Activated CD4-positive, alpha-beta T cell treated with anti-CD3 and anti-CD28 coated beads for 36 hours (primary cell): ENCODE measurements at regions of chr9 and their contacts with region 1.

Region 1: DNA sequence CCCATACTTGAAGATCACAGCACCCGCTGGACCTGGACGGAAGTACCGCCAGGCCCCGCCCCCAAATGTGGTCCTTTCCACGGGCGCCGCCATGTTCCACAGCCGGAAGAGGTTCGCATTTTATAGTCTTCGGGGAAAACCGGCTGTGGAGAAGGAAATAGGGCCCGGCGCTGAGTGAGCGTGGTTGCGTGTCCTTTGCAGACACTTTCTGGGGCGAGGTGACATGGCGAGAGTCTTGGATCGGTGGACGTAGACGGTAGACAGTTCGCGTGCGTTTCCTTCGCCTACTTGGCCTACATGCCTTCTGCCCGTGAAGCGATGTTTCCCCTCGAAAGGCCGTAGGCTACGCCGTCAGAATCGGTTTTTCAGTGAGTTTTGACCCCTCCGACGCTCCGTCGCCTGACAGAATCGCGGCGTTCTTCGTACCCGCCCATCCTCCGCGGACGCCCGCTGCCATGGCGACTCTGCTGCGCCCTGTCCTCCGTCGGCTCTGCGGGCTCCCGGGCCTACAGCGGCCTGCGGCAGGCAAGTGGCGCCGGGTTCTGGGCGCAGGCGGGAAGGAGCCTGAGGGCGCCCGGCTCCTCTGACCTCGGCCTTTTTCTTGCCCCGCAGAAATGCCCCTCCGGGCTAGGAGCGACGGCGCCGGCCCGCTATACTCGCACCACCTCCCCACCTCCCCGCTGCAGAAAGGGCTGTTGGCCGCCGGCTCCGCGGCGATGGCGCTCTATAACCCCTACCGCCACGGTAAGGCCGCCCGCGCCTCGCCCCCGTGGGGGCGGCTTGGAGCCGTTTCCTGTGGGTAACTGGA is at the starts of genes COQ4 and TRUB2:
- DNase-seq: peak; percentile 96
- ATAC-seq: peak; percentile 90
- H3K4me3 Mint-ChIP-seq: peak within 1 kb of the TSS; percentile 87
- H3K27ac Mint-ChIP-seq: peak within 1 kb of the TSS; percentile 93
- H3K4me1 Mint-ChIP-seq: peaks cover 19% of the 10 kb centered on the region
- H3K27me3 Mint-ChIP-seq: no peaks in the 10 kb centered on the region
- total RNA-seq, gene COQ4: 32.1 to 38.8 TPM
- total RNA-seq, gene TRUB2: 29.5 to 37.5 TPM

Region 2: GRCh38 chr9:128191406-128192046 is 131.1 kb before region 1 on chr9 and contains the start of gene CIZ1:
- CTCF ChIA-PET with region 1: no interaction called
- POLR2A ChIA-PET with region 1: no interaction called
- intact Hi-C with region 1: loop called in 1 of 2 experiments (anchors 5 kb)
- DNase-seq: peak; percentile 84
- ATAC-seq: peak; percentile 82
- H3K4me3 Mint-ChIP-seq: peak within 1 kb of the TSS; percentile 87
- H3K27ac Mint-ChIP-seq: peak within 1 kb of the TSS; percentile 85
- H3K4me1 Mint-ChIP-seq: peaks cover 28% of the 10 kb centered on the region
- H3K27me3 Mint-ChIP-seq: no peaks in the 10 kb centered on the region
- total RNA-seq, gene CIZ1: 79.5 to 110 TPM

Region 3: GRCh38 chr9:128218518-128219389 is 103.9 kb before region 1 on chr9:
- CTCF ChIA-PET with region 1: no interaction called
- POLR2A ChIA-PET with region 1: no interaction called
- intact Hi-C with region 1: loop called in 1 of 2 experiments (anchors 1 kb)
- DNase-seq: peak; percentile 97
- ATAC-seq: peak; percentile 98
- H3K4me3 Mint-ChIP-seq: peak overlapping the region; percentile 71
- H3K27ac Mint-ChIP-seq: peak overlapping the region; percentile 74
- H3K4me1 Mint-ChIP-seq: peaks cover 11% of the 10 kb centered on the region
- H3K27me3 Mint-ChIP-seq: no peaks in the 10 kb centered on the region

Region 4: GRCh38 chr9:128339771-128340690 is 17.4 kb after region 1 on chr9 and contains the start of gene SLC27A4:
- CTCF ChIA-PET with region 1: interaction called, 10 read pairs
- POLR2A ChIA-PET with region 1: interaction called, 7 read pairs
- intact Hi-C with region 1: loop called (anchors 1 kb)
- DNase-seq: peak; percentile 88
- ATAC-seq: peak; percentile 93
- H3K4me3 Mint-ChIP-seq: peak within 1 kb of the TSS; percentile 88
- H3K27ac Mint-ChIP-seq: peak within 1 kb of the TSS; percentile 83
- H3K4me1 Mint-ChIP-seq: peaks cover 6% of the 10 kb centered on the region
- H3K27me3 Mint-ChIP-seq: no peaks in the 10 kb centered on the region
- total RNA-seq, gene SLC27A4: 8.4 to 10.2 TPM

Region 5: DNA sequence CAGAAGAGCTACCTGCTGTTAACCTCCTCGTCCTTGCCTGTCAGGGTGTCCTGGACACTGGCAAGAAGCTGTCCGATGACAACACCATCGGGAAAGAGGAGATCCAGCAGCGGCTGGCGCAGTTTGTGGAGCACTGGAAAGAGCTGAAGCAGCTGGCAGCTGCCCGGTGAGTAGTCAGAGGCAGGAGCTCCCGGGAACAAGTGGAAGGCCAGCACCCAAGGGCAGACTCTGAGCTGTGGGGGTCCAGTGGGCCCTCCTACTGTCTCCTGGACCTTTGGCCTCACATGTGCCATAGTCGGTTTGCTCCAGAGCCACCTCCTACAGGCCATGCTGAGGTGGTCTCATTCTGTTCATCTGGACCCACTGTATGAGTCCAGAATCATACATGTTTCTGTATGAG is 295.3 kb after region 1 on chr9:
- CTCF ChIA-PET with region 1: no interaction called
- POLR2A ChIA-PET with region 1: no interaction called
- intact Hi-C with region 1: no loop called
- DNase-seq: no peak
- ATAC-seq: no peak
- H3K4me3 Mint-ChIP-seq: no peak overlapping the region
- H3K27ac Mint-ChIP-seq: no peak overlapping the region
- H3K4me1 Mint-ChIP-seq: no peaks in the 10 kb centered on the region
- H3K27me3 Mint-ChIP-seq: no peaks in the 10 kb centered on the region

Region 6: DNA sequence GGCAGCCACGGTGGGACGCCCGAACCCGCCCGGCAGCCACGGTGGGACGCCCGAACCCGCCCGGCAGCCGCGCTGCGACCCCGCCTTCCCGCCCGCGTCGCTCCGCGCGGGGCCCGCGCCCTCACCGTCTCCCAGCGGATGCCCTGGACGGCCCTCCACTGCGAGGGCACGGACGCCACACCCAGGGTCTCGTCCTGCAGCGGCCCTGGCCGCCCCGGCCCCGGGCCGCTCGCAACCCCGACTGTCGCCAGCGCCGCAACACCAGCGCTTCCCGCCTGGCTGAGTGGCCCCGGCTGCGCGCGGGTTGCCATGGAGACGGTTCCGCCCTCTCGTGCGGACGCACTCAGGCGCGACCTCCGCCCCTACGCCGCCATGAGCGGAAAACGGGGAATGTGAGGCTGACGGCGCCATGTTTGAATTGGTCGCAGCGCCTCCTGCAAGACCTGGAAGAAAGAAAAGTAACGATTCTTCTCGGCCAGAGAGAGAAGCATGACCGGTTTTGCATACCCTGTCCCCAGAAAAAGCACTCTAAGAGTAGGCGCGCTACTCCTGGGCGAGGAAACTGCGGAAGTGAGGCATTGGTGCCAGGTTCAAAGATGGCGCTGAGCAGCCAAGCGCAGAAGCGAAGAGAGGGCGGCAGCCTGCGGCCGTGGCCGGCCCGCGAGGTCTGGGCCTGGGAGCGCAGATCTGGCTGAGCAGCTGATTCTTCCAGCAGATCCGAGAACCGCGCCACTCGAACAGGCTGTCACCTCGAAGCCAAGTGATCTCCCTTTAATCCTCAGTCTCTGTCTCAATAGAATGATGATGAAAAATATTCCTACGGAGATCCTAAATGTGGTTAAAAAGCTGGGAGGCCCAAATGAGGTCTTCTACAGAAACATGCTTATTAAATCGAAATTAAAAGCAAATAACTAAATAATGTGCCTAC is 334.1 kb after region 1 on chr9 and contains the start of gene DYNC2I2:
- CTCF ChIA-PET with region 1: no interaction called
- POLR2A ChIA-PET with region 1: no interaction called
- intact Hi-C with region 1: loop called in 1 of 2 experiments (anchors 1 kb)
- DNase-seq: peak; percentile 99
- ATAC-seq: peak; percentile 98
- H3K4me3 Mint-ChIP-seq: peak within 1 kb of the TSS; percentile 82
- H3K27ac Mint-ChIP-seq: peak within 1 kb of the TSS; percentile 100
- H3K4me1 Mint-ChIP-seq: peaks cover 6% of the 10 kb centered on the region
- H3K27me3 Mint-ChIP-seq: no peaks in the 10 kb centered on the region
- total RNA-seq, gene DYNC2I2: 26.7 to 35.7 TPM

Region 7: GRCh38 chr9:128771745-128772519 is 449.3 kb after region 1 on chr9 and contains the start of gene ZER1:
- CTCF ChIA-PET with region 1: no interaction called
- POLR2A ChIA-PET with region 1: no interaction called
- intact Hi-C with region 1: loop called in 1 of 2 experiments (anchors 1 kb)
- DNase-seq: peak; percentile 97
- ATAC-seq: peak; percentile 94
- H3K4me3 Mint-ChIP-seq: peak within 1 kb of the TSS; percentile 82
- H3K27ac Mint-ChIP-seq: peak within 1 kb of the TSS; percentile 86
- H3K4me1 Mint-ChIP-seq: peaks cover 18% of the 10 kb centered on the region
- H3K27me3 Mint-ChIP-seq: no peaks in the 10 kb centered on the region
- total RNA-seq, gene ZER1: 17.1 to 19.3 TPM

Region 8: DNA sequence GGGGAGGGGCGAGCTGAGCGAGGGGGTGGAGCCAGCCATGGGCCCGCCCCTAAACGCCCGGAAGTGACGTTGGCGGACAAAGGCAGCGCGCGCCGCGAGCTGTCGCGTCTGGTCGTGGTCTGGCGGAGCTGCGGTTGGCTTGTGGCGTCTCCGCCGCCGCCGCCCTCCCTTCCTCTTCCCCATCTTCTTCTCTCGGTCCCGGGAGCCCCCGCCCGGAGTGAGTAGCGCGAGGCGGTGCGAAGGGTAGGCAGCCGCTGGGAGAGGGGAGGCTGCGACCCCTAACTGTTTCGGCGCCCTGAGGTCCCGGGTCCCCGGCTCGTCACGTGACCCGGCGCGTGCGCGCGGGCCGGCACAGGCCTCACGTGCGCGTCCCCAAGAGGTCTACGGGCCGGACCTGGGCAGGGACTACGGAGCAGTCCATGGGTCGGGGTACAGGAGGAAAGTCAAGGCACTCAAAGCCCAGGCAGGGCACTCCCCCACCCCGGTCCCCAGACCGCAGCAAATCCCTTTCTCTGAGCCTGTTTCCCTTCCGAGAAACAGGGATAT is 1303.5 kb after region 1 on chr9 and contains the start of gene NTMT1:
- CTCF ChIA-PET with region 1: no interaction called
- POLR2A ChIA-PET with region 1: no interaction called
- intact Hi-C with region 1: loop called in 1 of 2 experiments (anchors 2 kb)
- DNase-seq: peak; percentile 95
- ATAC-seq: peak; percentile 76
- H3K4me3 Mint-ChIP-seq: peak within 1 kb of the TSS; percentile 77
- H3K27ac Mint-ChIP-seq: peak within 1 kb of the TSS; percentile 93
- H3K4me1 Mint-ChIP-seq: peaks cover 52% of the 10 kb centered on the region
- H3K27me3 Mint-ChIP-seq: peaks cover 4% of the 10 kb centered on the region
- total RNA-seq, gene NTMT1: 50.1 to 69.2 TPM